IMR-90 (cell line): ENCODE measurements at regions of chr1 and their contacts with region 1.

Region 1: GRCh38 chr1:5975133-5975880 is 16.9 kb downstream of the NPHP4 start:
- DNase-seq: peak; percentile 64
- ATAC-seq: peak; percentile 98
- H3K4me3 ChIP-seq: no peak overlapping the region
- H3K27ac ChIP-seq: no peak overlapping the region
- H3K4me1 ChIP-seq: peaks cover 1% of the 10 kb centered on the region; the same call in 1 of the 2 replicates
- H3K27me3 ChIP-seq: no peaks in the 10 kb centered on the region
- CTCF ChIP-seq: peak; percentile 87
- POLR2A ChIP-seq: no peak
- RAD21 ChIP-seq: peak; percentile 95

Region 2: GRCh38 chr1:4652631-4653327 is 1322.5 kb before region 1 on chr1:
- CTCF ChIA-PET with region 1: no interaction called
- POLR2A ChIA-PET with region 1: no interaction called
- dilution Hi-C with region 1: no loop called
- in situ Hi-C with region 1: loop called (anchors 25 kb)
- intact Hi-C with region 1: no loop called
- DNase-seq: no peak
- ATAC-seq: peak; percentile 95
- H3K4me3 ChIP-seq: no peak overlapping the region
- H3K27ac ChIP-seq: no peak overlapping the region
- H3K4me1 ChIP-seq: no peaks in the 10 kb centered on the region
- H3K27me3 ChIP-seq: peaks cover 12% of the 10 kb centered on the region
- CTCF ChIP-seq: peak; percentile 53
- POLR2A ChIP-seq: no peak
- RAD21 ChIP-seq: peak; percentile 21; the same call in 1 of the 2 replicates

Region 3: DNA sequence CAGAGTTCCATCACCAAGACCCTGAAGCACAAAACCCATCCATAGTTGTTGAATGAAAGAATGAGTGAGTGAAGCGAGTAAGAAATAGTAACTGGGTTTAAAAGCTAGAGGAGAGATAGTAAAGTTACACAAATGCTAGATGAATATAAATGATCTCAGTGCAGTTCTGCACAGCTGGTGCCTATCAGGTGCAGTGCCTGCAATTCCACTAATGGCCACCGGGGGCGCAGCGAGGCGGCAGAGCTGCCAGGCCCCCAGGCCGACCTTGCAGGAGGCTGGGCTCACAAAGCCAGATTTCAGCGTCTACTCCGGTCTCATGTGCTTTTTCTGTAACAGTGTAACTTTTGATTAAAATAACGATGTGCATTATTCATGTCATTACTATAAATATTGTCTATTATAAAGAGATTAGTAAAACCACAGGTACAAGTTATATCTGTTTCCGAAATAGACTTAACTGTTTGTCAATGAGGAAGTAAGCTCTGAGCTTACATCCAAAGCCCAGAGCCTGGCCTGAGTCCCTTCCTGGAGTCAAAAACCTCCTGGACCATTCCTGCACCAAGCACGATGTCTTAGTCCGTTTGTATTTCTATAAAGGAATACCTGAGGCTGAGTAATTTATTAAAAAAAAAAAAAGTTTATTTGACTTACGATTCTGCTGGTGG is 460.7 kb before region 1 on chr1:
- CTCF ChIA-PET with region 1: interaction called, 6 read pairs
- POLR2A ChIA-PET with region 1: no interaction called
- dilution Hi-C with region 1: no loop called
- in situ Hi-C with region 1: loop called (anchors 5 kb)
- intact Hi-C with region 1: loop called (anchors 1 kb)
- DNase-seq: peak; percentile 7
- ATAC-seq: peak; percentile 87
- H3K4me3 ChIP-seq: no peak overlapping the region
- H3K27ac ChIP-seq: no peak overlapping the region
- H3K4me1 ChIP-seq: no peaks in the 10 kb centered on the region
- H3K27me3 ChIP-seq: no peaks in the 10 kb centered on the region
- CTCF ChIP-seq: peak; percentile 75
- POLR2A ChIP-seq: no peak
- RAD21 ChIP-seq: peak; percentile 36; the same call in 1 of the 2 replicates